Transverse colon (tissue), 4 donors: ENCODE measurements at regions of chr4 and their contacts with region 1.

Region 1: DNA sequence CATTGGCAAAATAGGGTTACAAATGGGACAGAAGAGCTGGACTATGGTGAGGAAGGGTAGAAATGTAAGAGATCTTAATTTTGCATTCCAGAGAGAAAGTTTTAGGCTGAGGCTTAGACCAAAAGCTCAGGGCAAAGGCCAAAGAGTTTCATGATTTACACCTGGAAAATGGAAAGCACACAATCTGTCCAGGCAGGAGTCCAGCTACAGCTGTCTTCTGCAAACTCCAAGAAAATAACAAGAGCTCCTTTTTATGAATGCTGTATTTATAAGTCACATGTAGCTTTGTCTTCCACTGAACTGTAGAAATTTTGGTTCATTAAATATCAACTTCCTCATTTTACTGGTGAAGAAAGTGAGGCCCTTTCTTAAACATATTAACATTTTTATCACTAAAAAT is 288.0 kb upstream of the ATOH1 start:
- DNase-seq: no peak
- H3K4me3 ChIP-seq: no peak overlapping the region
- H3K27ac ChIP-seq: no peak overlapping the region
- H3K4me1 ChIP-seq: no peaks in the 10 kb centered on the region
- H3K27me3 ChIP-seq: no peaks in the 10 kb centered on the region
- CTCF ChIP-seq: no peak
- EP300 ChIP-seq: no peak
- POLR2A ChIP-seq: no peak

Region 2: DNA sequence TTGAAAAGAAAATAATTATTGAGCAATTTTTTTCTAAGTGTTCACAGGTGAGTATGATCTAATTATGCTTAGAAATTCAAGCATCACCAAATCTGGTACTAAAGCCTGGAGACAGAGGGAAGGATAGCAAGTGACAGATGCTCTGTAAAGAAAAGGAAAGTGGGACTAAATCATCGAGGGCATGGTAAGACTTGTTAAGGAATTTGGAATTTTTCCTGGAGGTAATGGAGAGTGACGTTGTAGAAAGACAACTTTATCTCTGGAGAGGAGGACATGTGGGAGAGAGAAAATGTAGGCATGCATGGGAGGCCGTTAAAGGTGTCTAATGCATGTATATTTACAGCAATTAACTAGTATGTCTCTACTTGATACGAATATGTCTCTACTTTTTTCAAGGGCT is 45.2 kb before region 1 on chr4:
- in situ Hi-C with region 1: no loop called
- intact Hi-C with region 1: loop called (anchors 2 kb)
- DNase-seq: no peak
- H3K4me3 ChIP-seq: no peak overlapping the region
- H3K27ac ChIP-seq: no peak overlapping the region
- H3K4me1 ChIP-seq: no peaks in the 10 kb centered on the region
- H3K27me3 ChIP-seq: no peaks in the 10 kb centered on the region
- CTCF ChIP-seq: no peak
- EP300 ChIP-seq: no peak
- POLR2A ChIP-seq: no peak